Spleen (tissue), 13 donors: ENCODE measurements at regions of chr7 and their contacts with region 1.

Region 1: DNA sequence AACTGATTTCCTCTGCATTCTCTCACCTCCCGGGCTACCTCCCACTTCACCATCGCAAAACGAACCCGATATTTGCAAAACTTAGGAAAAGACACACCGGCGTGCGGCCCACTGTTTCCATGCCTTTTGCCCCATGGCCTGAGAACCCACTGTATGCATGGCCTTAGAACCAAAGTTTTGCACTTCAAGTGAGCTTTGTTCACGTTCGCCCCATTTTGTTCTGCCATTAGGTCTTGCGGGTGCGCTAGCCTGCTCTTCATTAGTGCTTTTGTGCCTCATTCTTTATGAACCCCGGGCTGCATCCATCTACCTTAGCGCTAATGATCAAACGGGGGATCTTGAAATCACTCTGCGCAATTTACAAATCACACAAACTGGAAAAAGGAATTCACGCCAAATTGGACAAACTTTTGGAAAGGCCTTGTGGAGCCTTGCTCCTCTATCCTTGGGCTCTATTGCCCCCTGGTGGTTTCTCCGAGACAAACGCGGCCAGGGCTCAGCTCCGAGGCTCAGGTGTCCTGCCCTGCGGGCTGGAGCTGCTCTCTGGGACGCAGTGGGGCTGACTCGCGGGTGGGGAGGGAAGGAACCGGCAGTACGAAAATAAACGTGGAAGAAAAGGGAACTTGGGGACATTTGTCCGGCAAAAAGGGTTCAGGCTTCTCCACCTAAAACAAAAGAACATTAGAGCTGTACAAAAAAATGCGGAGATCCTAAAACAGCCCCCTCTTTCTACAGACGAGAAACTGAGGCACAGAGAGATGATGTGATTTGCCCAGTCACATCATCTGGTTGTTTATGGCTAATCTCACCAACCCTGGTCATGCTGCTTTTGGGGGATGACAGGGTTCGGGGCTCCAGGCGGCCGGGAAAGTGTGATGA is 300.4 kb upstream of the NFE2L3 start:
- DNase-seq: peak; percentile 87
- H3K4me3 ChIP-seq: peak overlapping the region in 4 of 8 donors; percentile 10 to 59 (median 18)
- H3K27ac ChIP-seq: peak overlapping the region in 2 of 8 donors; percentile 26 to 62
- H3K4me1 ChIP-seq: peaks cover 12 to 40% (median 22%) of the 10 kb centered on the region in 6 donors
- H3K27me3 ChIP-seq: peaks cover 8 to 78% (median 58%) of the 10 kb centered on the region in 7 donors
- CTCF ChIP-seq: peak; percentile 47 to 84 (median 82)
- POLR2A ChIP-seq: no peak

Region 2: DNA sequence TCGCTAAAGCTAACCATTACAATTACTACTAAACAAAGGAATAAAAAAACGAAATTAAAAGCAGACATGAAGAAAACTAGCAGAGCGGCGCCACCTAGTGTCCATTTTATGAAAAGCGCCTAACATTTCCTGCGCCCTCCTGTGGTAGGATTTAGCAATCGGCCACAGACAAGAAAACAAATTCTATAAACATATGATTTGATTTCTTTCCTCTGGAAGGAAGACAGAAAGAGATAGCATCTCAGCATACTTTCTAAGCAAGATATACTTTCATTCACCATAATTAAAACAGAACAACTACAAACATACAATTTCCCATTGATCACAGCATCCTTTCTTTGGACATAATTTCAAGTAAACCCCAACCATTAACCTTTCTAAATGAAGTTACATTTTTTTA is 285.6 kb before region 1 on chr7:
- intact Hi-C with region 1: loop called (anchors 5 kb)
- DNase-seq: no peak
- H3K4me3 ChIP-seq: no peak overlapping the region
- H3K27ac ChIP-seq: no peak overlapping the region
- H3K4me1 ChIP-seq: peaks cover 0 to 9% (median 4%) of the 10 kb centered on the region in 6 donors
- H3K27me3 ChIP-seq: no peaks in the 10 kb centered on the region
- CTCF ChIP-seq: peak; percentile 96 to 100 (median 98)
- POLR2A ChIP-seq: no peak

Region 3: DNA sequence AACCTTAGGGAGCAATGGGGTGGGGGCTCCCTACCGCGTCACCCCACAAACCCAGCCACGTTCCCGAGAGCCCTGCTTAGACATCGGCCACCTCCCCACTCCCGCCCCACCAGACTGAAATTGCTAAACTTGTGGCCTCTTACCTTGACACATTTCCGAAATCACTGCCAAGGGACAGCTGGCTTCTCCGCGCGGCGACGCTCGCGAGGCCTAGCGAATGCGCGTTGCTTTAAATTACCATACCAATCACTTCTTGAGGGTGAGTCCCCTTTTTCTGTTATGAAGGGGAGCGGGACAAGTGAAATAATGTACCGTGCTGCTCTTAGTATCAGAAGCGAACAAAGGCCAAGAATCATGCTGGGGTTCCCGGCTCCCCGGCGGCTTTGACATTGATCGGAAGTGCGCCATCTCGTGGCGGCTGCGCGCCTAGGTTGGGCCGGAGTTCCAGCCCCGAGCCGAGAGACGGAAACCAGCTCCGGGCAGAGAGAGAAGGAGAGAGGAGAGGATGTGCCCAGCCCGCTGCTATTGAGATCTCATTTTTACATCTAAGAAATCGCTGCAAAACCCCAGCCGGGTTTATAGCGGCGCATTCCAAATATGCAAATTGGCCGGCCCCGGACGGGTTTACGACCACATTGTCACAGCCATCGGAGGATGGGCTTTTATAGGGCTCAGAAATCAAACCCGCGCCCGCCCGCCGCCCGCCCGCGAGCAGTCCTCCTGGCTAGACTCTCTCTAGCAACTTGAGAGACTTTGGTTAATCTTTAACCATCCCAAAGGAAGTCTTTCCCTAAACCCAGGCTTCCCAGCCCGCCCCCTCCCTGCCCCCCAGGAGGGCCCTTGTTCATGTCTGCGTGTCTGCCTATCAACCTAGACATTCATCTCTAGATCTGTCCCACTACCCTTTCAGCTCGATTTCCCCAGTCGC is 1328.2 kb after region 1 on chr7:
- intact Hi-C with region 1: loop called (anchors 10 kb)
- DNase-seq: peak; percentile 89
- H3K4me3 ChIP-seq: peak overlapping the region in 2 of 8 donors; percentile 8 to 48
- H3K27ac ChIP-seq: no peak overlapping the region
- H3K4me1 ChIP-seq: peaks cover 15 to 44% (median 30%) of the 10 kb centered on the region in 6 donors
- H3K27me3 ChIP-seq: peaks cover 19 to 100% (median 100%) of the 10 kb centered on the region in 7 donors
- CTCF ChIP-seq: peak; percentile 23 to 91 (median 81)
- POLR2A ChIP-seq: no peak